ENCODE measurements at regions of chr10 and their contacts with region 1.

Region 1: DNA sequence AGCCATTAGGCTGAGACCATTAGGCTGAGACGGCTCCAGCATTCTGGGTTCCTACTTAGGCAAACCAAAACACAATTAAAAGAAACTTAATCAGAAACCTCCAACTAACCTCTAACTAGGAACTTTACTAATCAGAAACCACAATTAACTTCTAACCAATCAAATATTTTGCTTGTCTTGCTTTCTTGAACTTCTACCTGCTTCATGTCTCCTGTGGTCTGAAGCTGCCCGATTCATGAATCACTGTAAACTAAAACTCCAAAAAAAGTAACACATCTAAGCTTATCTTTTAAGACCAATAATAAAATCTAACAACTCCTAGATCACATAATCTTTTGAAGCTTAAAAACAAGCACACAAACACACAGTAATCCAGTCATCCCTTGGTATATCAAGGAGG is 76.1 kb downstream of the PDSS1 start:
- DNase-seq: no peak
- H3K4me3 ChIP-seq: no peak overlapping the region
- CTCF ChIP-seq: no peak

Region 2: GRCh38 chr10:26737730-26738129 is 35.9 kb before region 1 on chr10:
- in situ Hi-C with region 1: loop called (anchors 5 kb)
- DNase-seq: no peak
- H3K4me3 ChIP-seq: no peak overlapping the region
- CTCF ChIP-seq: no peak

Measured in astrocyte of the cerebellum (primary cell).